Ascending aorta (tissue), 2 donors: ENCODE measurements at regions of chr10 and their contacts with region 1.

Region 1: DNA sequence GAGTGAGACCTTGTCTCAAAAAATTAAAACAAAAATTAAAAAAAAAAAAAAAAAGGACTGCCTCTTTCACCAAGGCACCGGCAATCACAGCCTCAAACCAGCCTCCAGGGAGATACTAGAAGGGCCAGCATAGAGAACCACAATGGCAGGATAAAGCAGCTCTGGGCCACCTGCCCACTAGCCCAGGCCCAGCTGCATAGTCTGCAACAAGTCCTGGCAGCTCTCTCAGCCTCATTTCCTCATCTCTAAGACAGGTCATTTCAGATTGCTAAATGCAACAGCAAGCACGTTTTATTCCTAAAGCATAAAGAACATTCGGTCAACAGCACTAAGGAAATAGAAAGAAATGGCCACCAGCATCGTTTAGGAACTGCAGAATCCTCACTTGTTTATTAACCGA is 28.8 kb downstream of the XPNPEP1 start:
- DNase-seq: peak; percentile 46 to 91
- H3K4me3 ChIP-seq: peak overlapping the region; percentile 6 to 18
- H3K27ac ChIP-seq: peak overlapping the region; percentile 82 to 94
- H3K4me1 ChIP-seq: peaks cover 19 to 94% of the 10 kb centered on the region in 2 donors
- H3K27me3 ChIP-seq: no peaks in the 10 kb centered on the region
- CTCF ChIP-seq: no peak

Region 2: GRCh38 chr10:109966961-109967738 is 72.6 kb after region 1 on chr10:
- intact Hi-C with region 1: loop called (anchors 2 kb)
- DNase-seq: no peak
- H3K4me3 ChIP-seq: no peak overlapping the region
- H3K27ac ChIP-seq: peak overlapping the region in 1 of 2 donors; percentile 2
- H3K4me1 ChIP-seq: peaks cover 11 to 47% of the 10 kb centered on the region in 2 donors
- H3K27me3 ChIP-seq: no peaks in the 10 kb centered on the region
- CTCF ChIP-seq: no peak

Region 3: GRCh38 chr10:110110338-110110737 is 215.8 kb after region 1 on chr10:
- intact Hi-C with region 1: loop called (anchors 5 kb)
- DNase-seq: no peak
- H3K4me3 ChIP-seq: no peak overlapping the region
- H3K27ac ChIP-seq: no peak overlapping the region
- H3K4me1 ChIP-seq: peaks cover 0 to 4% of the 10 kb centered on the region in 2 donors
- H3K27me3 ChIP-seq: no peaks in the 10 kb centered on the region
- CTCF ChIP-seq: no peak

Region 4: DNA sequence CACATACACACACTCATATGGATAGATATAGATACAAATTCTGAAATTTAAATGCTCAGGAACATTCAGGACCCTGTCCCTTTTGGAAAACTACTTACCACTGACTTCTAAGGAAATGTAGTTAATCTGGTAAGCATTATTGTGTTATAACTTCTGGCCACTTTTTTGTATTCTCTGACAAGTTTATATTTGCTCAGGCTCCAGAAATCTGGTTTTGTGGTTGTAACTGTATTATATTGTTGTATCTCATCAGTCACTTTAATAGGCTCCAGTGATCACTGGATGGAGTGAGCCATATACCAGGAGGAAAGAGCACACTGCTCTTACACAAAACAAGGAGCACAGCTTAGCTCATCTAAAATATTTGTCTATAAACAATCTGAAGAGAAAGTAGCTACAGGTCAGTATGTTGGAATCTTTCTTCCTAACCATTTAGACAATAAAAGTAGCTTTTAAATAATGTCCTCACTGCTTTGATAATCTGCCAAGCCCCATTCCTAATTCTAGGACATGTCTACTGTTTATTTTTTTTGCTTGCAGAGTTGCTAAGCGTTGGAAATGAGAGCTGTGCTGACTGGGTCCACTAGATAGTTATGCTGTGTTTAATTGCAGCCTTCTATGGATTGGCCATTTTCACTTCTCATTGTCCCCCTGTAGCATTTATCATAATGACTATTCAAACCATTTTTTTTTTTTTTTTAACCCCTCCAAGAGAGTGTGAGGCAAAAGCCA is 366.4 kb after region 1 on chr10:
- intact Hi-C with region 1: loop called (anchors 5 kb)
- DNase-seq: no peak
- H3K4me3 ChIP-seq: no peak overlapping the region
- H3K27ac ChIP-seq: peak overlapping the region; percentile 84 to 90
- H3K4me1 ChIP-seq: peaks cover 8 to 61% of the 10 kb centered on the region in 2 donors
- H3K27me3 ChIP-seq: no peaks in the 10 kb centered on the region
- CTCF ChIP-seq: no peak